Transverse colon (tissue), 4 donors: ENCODE measurements at regions of chr5 and their contacts with region 1.

Region 1: GRCh38 chr5:60417500-60418181 is 282.3 kb downstream of the DEPDC1B start:
- DNase-seq: no peak
- H3K4me3 ChIP-seq: no peak overlapping the region
- H3K27ac ChIP-seq: no peak overlapping the region
- H3K4me1 ChIP-seq: no peaks in the 10 kb centered on the region
- H3K27me3 ChIP-seq: no peaks in the 10 kb centered on the region
- CTCF ChIP-seq: no peak
- EP300 ChIP-seq: no peak
- POLR2A ChIP-seq: no peak

Region 2: GRCh38 chr5:60447488-60447920 is 29.9 kb after region 1 on chr5:
- in situ Hi-C with region 1: no loop called
- intact Hi-C with region 1: no loop called
- DNase-seq: no peak
- H3K4me3 ChIP-seq: no peak overlapping the region
- H3K27ac ChIP-seq: no peak overlapping the region
- H3K4me1 ChIP-seq: peaks cover 0 to 6% (median 0%) of the 10 kb centered on the region in 4 donors
- H3K27me3 ChIP-seq: no peaks in the 10 kb centered on the region
- CTCF ChIP-seq: no peak
- EP300 ChIP-seq: no peak
- POLR2A ChIP-seq: no peak

Region 3: GRCh38 chr5:60473654-60474053 is 56.0 kb after region 1 on chr5:
- in situ Hi-C with region 1: loop called in 1 of 4 experiments (anchors 10 kb)
- intact Hi-C with region 1: no loop called
- DNase-seq: no peak
- H3K4me3 ChIP-seq: no peak overlapping the region
- H3K27ac ChIP-seq: no peak overlapping the region
- H3K4me1 ChIP-seq: no peaks in the 10 kb centered on the region
- H3K27me3 ChIP-seq: no peaks in the 10 kb centered on the region
- CTCF ChIP-seq: no peak
- EP300 ChIP-seq: no peak
- POLR2A ChIP-seq: no peak

Region 4: GRCh38 chr5:60794691-60795090 is 377.1 kb after region 1 on chr5:
- in situ Hi-C with region 1: no loop called
- intact Hi-C with region 1: loop called (anchors 5 kb)
- DNase-seq: no peak
- H3K4me3 ChIP-seq: no peak overlapping the region
- H3K27ac ChIP-seq: no peak overlapping the region
- H3K4me1 ChIP-seq: no peaks in the 10 kb centered on the region
- H3K27me3 ChIP-seq: no peaks in the 10 kb centered on the region
- CTCF ChIP-seq: no peak
- EP300 ChIP-seq: no peak
- POLR2A ChIP-seq: no peak